B cell (primary cell): ENCODE measurements at regions of chr16 and their contacts with region 1.

Region 1: DNA sequence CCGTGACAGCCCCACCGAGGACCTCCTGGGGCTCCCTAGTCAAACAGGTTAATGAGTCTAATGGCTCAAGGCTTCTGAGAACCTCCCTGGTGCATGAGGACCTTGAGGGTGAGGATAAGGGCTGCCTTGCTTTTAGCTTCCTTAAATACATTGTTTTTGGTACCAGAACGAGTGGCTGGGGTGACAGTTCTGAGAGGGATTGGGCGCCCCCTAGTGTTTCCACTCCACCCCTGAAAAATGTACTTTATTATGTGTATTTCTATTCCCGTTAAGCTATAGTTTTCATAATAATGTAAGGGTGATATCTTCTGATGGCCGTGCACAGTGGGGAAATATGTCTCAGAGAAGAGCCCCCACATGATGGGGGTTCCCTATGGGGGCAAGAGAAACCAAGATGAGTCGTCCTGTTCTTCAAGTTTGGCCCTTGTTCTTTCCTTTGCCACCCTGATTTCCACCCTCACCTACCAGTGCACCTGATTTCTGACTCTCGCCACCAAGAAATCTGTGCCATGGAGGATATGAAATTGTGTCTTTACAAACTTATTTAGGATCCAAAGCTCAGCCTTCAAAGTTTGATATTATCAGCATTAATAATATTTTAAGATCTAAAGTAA is 14.5 kb upstream of the VWA3A start:
- DNase-seq: peak; percentile 79
- ATAC-seq: peak; percentile 60
- H3K4me3 ChIP-seq: no peak overlapping the region
- H3K4me3 Mint-ChIP-seq: no peak overlapping the region
- H3K27ac ChIP-seq: no peak overlapping the region
- H3K27ac Mint-ChIP-seq: no peak overlapping the region
- H3K4me1 ChIP-seq: no peaks in the 10 kb centered on the region
- H3K4me1 Mint-ChIP-seq: no peaks in the 10 kb centered on the region
- H3K27me3 ChIP-seq: no peaks in the 10 kb centered on the region
- H3K27me3 Mint-ChIP-seq: no peaks in the 10 kb centered on the region
- CTCF ChIP-seq: peak; percentile 96

Region 2: GRCh38 chr16:20089246-20089965 is 1988.4 kb before region 1 on chr16:
- CTCF ChIA-PET with region 1: no interaction called
- POLR2A ChIA-PET with region 1: no interaction called
- intact Hi-C with region 1: no loop called
- DNase-seq: no peak
- ATAC-seq: no peak
- H3K4me3 ChIP-seq: no peak overlapping the region
- H3K4me3 Mint-ChIP-seq: no peak overlapping the region
- H3K27ac ChIP-seq: no peak overlapping the region
- H3K27ac Mint-ChIP-seq: no peak overlapping the region
- H3K4me1 ChIP-seq: no peaks in the 10 kb centered on the region
- H3K4me1 Mint-ChIP-seq: no peaks in the 10 kb centered on the region
- H3K27me3 ChIP-seq: no peaks in the 10 kb centered on the region
- H3K27me3 Mint-ChIP-seq: peaks cover 14% of the 10 kb centered on the region
- CTCF ChIP-seq: no peak

Region 3: GRCh38 chr16:21994856-21995465 is 82.8 kb before region 1 on chr16:
- CTCF ChIA-PET with region 1: interaction called, 290 read pairs
- POLR2A ChIA-PET with region 1: no interaction called
- intact Hi-C with region 1: no loop called
- DNase-seq: no peak
- ATAC-seq: no peak
- H3K4me3 ChIP-seq: no peak overlapping the region
- H3K4me3 Mint-ChIP-seq: no peak overlapping the region
- H3K27ac ChIP-seq: no peak overlapping the region
- H3K27ac Mint-ChIP-seq: no peak overlapping the region
- H3K4me1 ChIP-seq: no peaks in the 10 kb centered on the region
- H3K4me1 Mint-ChIP-seq: no peaks in the 10 kb centered on the region
- H3K27me3 ChIP-seq: no peaks in the 10 kb centered on the region
- H3K27me3 Mint-ChIP-seq: no peaks in the 10 kb centered on the region
- CTCF ChIP-seq: no peak

Region 4: DNA sequence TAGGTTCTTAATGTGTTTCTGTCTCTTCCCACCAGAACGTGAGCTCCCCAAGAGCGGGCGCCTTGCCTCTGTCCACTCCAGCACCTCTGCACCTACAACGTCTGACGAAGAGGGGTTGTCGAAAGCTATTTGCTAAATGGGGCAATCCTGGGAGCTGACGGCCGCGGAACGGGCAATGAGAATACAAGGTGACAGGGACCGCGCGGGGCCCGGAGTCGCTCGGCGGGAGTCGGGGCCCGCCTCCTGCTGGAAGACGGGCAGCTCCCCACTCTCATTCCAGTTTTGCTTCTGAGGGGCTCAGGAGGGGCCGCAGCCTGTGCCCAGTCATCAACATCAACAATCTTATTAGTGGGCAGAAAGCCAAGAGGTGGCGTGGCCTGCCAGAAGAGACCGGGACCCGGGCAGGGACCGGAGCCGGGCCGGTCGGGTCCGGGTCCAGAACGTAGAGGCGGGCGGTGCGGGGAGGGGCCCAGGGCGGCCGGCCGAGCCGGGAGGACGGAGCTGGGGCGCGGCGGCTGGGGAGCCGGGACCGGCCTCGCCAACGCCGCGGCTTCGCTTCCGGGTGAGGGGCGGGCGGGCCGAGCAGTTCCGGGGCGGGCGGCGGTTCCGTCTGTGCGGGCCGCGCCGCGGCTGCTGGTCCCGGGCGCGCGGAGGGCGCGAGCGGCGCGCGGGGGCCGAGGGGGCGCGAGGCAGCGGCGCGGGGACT is 70.1 kb before region 1 on chr16 and contains the start of gene MOSMO:
- CTCF ChIA-PET with region 1: interaction called, 290 read pairs
- POLR2A ChIA-PET with region 1: no interaction called
- intact Hi-C with region 1: no loop called
- DNase-seq: peak; percentile 79
- ATAC-seq: peak; percentile 89
- H3K4me3 ChIP-seq: peak within 1 kb of the TSS; percentile 55 to 97 (median 89)
- H3K4me3 Mint-ChIP-seq: peak within 1 kb of the TSS; percentile 93
- H3K27ac ChIP-seq: peak within 1 kb of the TSS; percentile 60 to 82
- H3K27ac Mint-ChIP-seq: peak within 1 kb of the TSS; percentile 88
- H3K4me1 ChIP-seq: peaks cover 17 to 22% of the 10 kb centered on the region in 2 donors
- H3K4me1 Mint-ChIP-seq: peaks cover 30% of the 10 kb centered on the region
- H3K27me3 ChIP-seq: no peaks in the 10 kb centered on the region
- H3K27me3 Mint-ChIP-seq: no peaks in the 10 kb centered on the region
- CTCF ChIP-seq: no peak
- total RNA-seq, gene MOSMO: 18.6 and 20.2 TPM in 2 replicates

Region 5: DNA sequence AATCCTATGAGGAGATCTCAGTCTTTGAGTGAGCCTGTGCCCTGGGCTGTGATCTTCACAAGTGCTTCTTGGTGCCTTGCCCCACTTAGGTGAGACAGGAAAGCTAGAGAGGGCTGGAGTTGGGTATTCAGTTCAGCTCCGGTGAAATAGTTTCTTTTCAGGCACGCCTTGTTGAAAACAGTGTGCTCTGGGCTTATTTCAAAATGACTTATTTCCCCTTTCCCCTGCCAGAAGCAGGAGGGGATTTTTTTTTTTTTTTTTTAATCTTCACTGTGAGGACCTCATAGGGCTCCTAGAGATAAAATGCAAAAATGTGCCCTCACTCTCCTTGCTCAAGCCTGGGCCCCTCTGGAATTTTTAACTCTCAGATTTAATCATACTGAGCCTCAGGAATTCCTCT is 42.7 kb before region 1 on chr16:
- CTCF ChIA-PET with region 1: interaction called, 13 read pairs
- POLR2A ChIA-PET with region 1: no interaction called
- intact Hi-C with region 1: loop called (anchors 5 kb)
- DNase-seq: peak; percentile 19
- ATAC-seq: no peak
- H3K4me3 ChIP-seq: no peak overlapping the region
- H3K4me3 Mint-ChIP-seq: no peak overlapping the region
- H3K27ac ChIP-seq: peak overlapping the region in 1 of 2 donors; percentile 66
- H3K27ac Mint-ChIP-seq: no peak overlapping the region
- H3K4me1 ChIP-seq: peaks cover 5 to 8% of the 10 kb centered on the region in 2 donors
- H3K4me1 Mint-ChIP-seq: peaks cover 19% of the 10 kb centered on the region
- H3K27me3 ChIP-seq: no peaks in the 10 kb centered on the region
- H3K27me3 Mint-ChIP-seq: no peaks in the 10 kb centered on the region
- CTCF ChIP-seq: no peak

Region 6: DNA sequence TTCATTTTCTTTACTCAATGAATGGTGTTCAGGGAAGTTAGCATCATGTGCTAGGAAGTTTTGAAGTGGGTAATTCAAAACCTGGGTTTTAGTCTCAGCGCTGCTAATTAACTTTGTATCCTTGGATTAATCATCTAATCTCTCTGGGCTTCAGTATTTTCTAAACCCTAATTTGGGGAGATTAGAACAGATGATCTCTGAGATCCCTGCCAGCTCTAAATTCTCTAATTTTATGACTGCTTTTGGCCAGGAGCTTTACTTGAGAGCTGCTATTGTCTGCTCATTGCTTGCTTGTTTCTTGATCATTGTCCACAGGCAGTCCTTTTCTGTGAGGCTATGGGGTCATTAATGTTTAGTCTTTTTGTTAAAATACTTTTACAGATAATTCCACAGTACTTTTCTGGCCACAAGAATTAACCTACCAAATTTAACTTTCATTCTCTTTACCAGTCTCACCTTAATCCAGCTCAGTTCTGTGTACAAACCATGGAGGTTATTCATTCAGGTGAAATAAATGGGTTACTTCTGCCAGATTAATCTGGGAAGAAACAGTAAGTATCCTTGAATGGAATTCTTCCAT is 13.8 kb before region 1 on chr16:
- CTCF ChIA-PET with region 1: interaction called, 61 read pairs
- POLR2A ChIA-PET with region 1: no interaction called
- intact Hi-C with region 1: no loop called
- DNase-seq: no peak
- ATAC-seq: no peak
- H3K4me3 ChIP-seq: no peak overlapping the region
- H3K4me3 Mint-ChIP-seq: no peak overlapping the region
- H3K27ac ChIP-seq: no peak overlapping the region
- H3K27ac Mint-ChIP-seq: no peak overlapping the region
- H3K4me1 ChIP-seq: no peaks in the 10 kb centered on the region
- H3K4me1 Mint-ChIP-seq: peaks cover 3% of the 10 kb centered on the region
- H3K27me3 ChIP-seq: no peaks in the 10 kb centered on the region
- H3K27me3 Mint-ChIP-seq: no peaks in the 10 kb centered on the region
- CTCF ChIP-seq: no peak

Region 7: GRCh38 chr16:22098405-22099255 is 20.8 kb after region 1 on chr16:
- CTCF ChIA-PET with region 1: interaction called, 39 read pairs
- POLR2A ChIA-PET with region 1: no interaction called
- intact Hi-C with region 1: no loop called
- DNase-seq: peak; percentile 56
- ATAC-seq: peak; percentile 58
- H3K4me3 ChIP-seq: no peak overlapping the region
- H3K4me3 Mint-ChIP-seq: peak overlapping the region; percentile 54
- H3K27ac ChIP-seq: no peak overlapping the region
- H3K27ac Mint-ChIP-seq: no peak overlapping the region
- H3K4me1 ChIP-seq: peaks cover 0 to 4% of the 10 kb centered on the region in 2 donors
- H3K4me1 Mint-ChIP-seq: peaks cover 4% of the 10 kb centered on the region
- H3K27me3 ChIP-seq: peaks cover 0 to 6% (median 4%) of the 10 kb centered on the region in 4 experiments
- H3K27me3 Mint-ChIP-seq: peaks cover 10% of the 10 kb centered on the region
- CTCF ChIP-seq: peak; percentile 61